HepG2 (cell line): ENCODE measurements at regions of chr13 and their contacts with region 1.

Region 1: GRCh38 chr13:48431987-48432615 is 19.2 kb upstream of the LPAR6 start:
- DNase-seq: peak; percentile 7
- ATAC-seq: no peak
- H3K4me3 ChIP-seq: peak overlapping the region in 2 of 3 experiments; percentile 13 to 40; a peak in 3 of 6 replicates
- H3K27ac ChIP-seq: peak overlapping the region; percentile 63
- H3K4me1 ChIP-seq: peaks cover 41% of the 10 kb centered on the region
- H3K27me3 ChIP-seq: no peaks in the 10 kb centered on the region
- CTCF ChIP-seq: no peak
- EP300 ChIP-seq: no peak
- POLR2A ChIP-seq: no peak
- RAD21 ChIP-seq: no peak

Region 2: DNA sequence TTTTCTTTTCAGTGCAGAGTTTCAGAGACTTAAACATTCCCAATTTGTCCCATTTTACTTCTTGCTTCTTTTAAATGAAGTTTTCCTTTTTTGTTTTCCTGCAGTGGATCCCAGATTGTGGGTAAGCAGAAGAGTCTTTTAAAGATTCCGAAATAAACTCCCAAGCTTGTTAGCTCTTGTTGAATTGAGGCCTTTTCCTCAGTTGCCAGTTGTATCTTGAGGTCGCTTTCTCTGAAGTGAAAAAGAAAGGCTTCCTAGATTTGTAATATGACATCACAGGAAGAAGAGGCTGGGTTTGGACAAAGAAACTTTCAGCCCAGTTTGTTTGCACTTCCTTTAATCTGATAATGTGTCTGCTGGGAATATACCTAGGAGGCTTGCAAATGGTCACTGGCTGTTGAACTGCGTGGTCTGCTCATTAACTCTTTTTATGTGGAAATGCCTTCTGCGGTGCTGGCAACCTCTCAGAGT is 19.2 kb before region 1 on chr13 and contains the start of gene LPAR6:
- CTCF ChIA-PET with region 1: no interaction called
- POLR2A ChIA-PET with region 1: interaction called, 4 read pairs
- in situ Hi-C with region 1: no loop called
- intact Hi-C with region 1: loop called (anchors 1 kb)
- DNase-seq: peak; percentile 95
- ATAC-seq: peak; percentile 98
- H3K4me3 ChIP-seq: peak within 1 kb of the TSS; percentile 72 to 88 (median 87)
- H3K27ac ChIP-seq: peak within 1 kb of the TSS; percentile 88
- H3K4me1 ChIP-seq: peaks cover 23% of the 10 kb centered on the region
- H3K27me3 ChIP-seq: no peaks in the 10 kb centered on the region; a peak in 1 of 5 replicates
- CTCF ChIP-seq: no peak
- EP300 ChIP-seq: peak in 1 of 2 experiments; percentile 87; a peak in 2 of 4 replicates
- POLR2A ChIP-seq: peak; percentile 61 to 66; a peak in 3 of 4 replicates
- RAD21 ChIP-seq: no peak
- total RNA-seq, gene LPAR6: 17.9 and 24.4 TPM in 2 replicates

Region 3: GRCh38 chr13:48478391-48478790 is 46.3 kb after region 1 on chr13:
- CTCF ChIA-PET with region 1: no interaction called
- POLR2A ChIA-PET with region 1: no interaction called
- in situ Hi-C with region 1: no loop called
- intact Hi-C with region 1: loop called (anchors 1 kb)
- DNase-seq: no peak
- ATAC-seq: no peak
- H3K4me3 ChIP-seq: no peak overlapping the region
- H3K27ac ChIP-seq: no peak overlapping the region
- H3K4me1 ChIP-seq: peaks cover 14% of the 10 kb centered on the region
- H3K27me3 ChIP-seq: no peaks in the 10 kb centered on the region
- CTCF ChIP-seq: no peak
- EP300 ChIP-seq: no peak
- POLR2A ChIP-seq: no peak
- RAD21 ChIP-seq: no peak